HepG2 (cell line): ENCODE measurements at regions of chr17 and their contacts with region 1.

Region 1: GRCh38 chr17:43477832-43478634 is 5.7 kb upstream of the DHX8 start:
- DNase-seq: peak; percentile 82
- ATAC-seq: peak; percentile 81
- H3K4me3 ChIP-seq: peak overlapping the region; percentile 15 to 54 (median 18); a peak in 5 of 6 replicates
- H3K27ac ChIP-seq: peak overlapping the region; percentile 79
- H3K4me1 ChIP-seq: peaks cover 83% of the 10 kb centered on the region
- H3K27me3 ChIP-seq: no peaks in the 10 kb centered on the region
- CTCF ChIP-seq: no peak
- EP300 ChIP-seq: peak; percentile 52 to 66; a peak in 3 of 4 replicates
- POLR2A ChIP-seq: no peak
- RAD21 ChIP-seq: no peak; the same call in 1 of the 2 replicates

Region 2: DNA sequence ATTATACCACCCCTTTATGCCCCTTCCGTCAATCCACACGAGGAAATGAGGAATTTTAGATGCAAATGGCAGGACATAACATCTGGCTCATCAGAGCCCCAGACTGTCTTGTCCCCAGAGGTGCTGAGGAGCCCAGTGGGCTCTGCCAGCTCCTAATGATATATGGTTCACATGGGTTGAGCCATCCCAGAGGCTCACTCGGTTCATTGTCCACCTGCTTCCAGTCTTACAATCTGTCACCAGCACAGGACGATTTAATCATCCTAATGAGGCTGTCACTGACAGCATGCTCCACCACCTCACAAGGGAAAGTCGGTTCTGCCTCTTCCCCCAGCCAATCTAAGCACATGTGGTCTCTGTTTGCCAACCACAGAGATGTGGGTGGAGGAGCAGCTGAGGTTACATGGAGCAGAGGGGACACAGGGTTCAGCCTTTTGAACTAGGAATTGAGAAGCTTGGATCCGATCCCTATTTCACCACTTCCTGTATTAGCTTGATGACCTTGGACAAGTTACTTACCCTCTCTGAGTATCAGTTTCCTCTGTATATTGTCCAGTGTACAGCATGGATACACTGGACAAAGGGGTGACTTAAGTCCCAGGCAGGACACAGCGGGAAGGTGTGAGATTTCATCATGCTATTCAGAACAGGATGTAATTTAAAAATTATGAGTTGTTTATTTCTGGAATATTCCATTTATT is 21.2 kb before region 1 on chr17:
- CTCF ChIA-PET with region 1: no interaction called
- POLR2A ChIA-PET with region 1: interaction called, 47 read pairs
- in situ Hi-C with region 1: no loop called
- intact Hi-C with region 1: no loop called
- DNase-seq: peak; percentile 100
- ATAC-seq: peak; percentile 95
- H3K4me3 ChIP-seq: peak overlapping the region in 1 of 3 experiments; percentile 17; a peak in 1 of 6 replicates
- H3K27ac ChIP-seq: peak overlapping the region; percentile 83
- H3K4me1 ChIP-seq: peaks cover 79% of the 10 kb centered on the region
- H3K27me3 ChIP-seq: no peaks in the 10 kb centered on the region
- CTCF ChIP-seq: peak; percentile 37
- EP300 ChIP-seq: peak; percentile 79 to 99; a peak in 3 of 4 replicates
- POLR2A ChIP-seq: peak; percentile 60 to 68
- RAD21 ChIP-seq: peak; percentile 57; the same call in 1 of the 2 replicates

Region 3: GRCh38 chr17:43490621-43491020 is 12.6 kb after region 1 on chr17:
- CTCF ChIA-PET with region 1: no interaction called
- POLR2A ChIA-PET with region 1: no interaction called
- in situ Hi-C with region 1: no loop called
- intact Hi-C with region 1: no loop called
- DNase-seq: no peak
- ATAC-seq: no peak
- H3K4me3 ChIP-seq: no peak overlapping the region
- H3K27ac ChIP-seq: no peak overlapping the region
- H3K4me1 ChIP-seq: peaks cover 17% of the 10 kb centered on the region
- H3K27me3 ChIP-seq: no peaks in the 10 kb centered on the region
- CTCF ChIP-seq: no peak
- EP300 ChIP-seq: no peak
- POLR2A ChIP-seq: no peak
- RAD21 ChIP-seq: no peak

Region 4: GRCh38 chr17:43591779-43592562 is 113.9 kb after region 1 on chr17:
- CTCF ChIA-PET with region 1: no interaction called
- POLR2A ChIA-PET with region 1: no interaction called
- in situ Hi-C with region 1: no loop called
- intact Hi-C with region 1: no loop called
- DNase-seq: no peak
- ATAC-seq: no peak
- H3K4me3 ChIP-seq: no peak overlapping the region
- H3K27ac ChIP-seq: no peak overlapping the region
- H3K4me1 ChIP-seq: peaks cover 41% of the 10 kb centered on the region
- H3K27me3 ChIP-seq: no peaks in the 10 kb centered on the region
- CTCF ChIP-seq: no peak
- EP300 ChIP-seq: no peak
- POLR2A ChIP-seq: no peak
- RAD21 ChIP-seq: no peak